H1 (cell line): ENCODE measurements at regions of chr9 and their contacts with region 1.

Region 1: GRCh38 chr9:94681508-94681907 is 42.2 kb upstream of the FBP1 start:
- DNase-seq: peak; percentile 19 to 63
- H3K4me3 ChIP-seq: no peak overlapping the region
- H3K27ac ChIP-seq: no peak overlapping the region
- H3K4me1 ChIP-seq: no peaks in the 10 kb centered on the region; a peak in 1 of 7 replicates
- H3K27me3 ChIP-seq: no peaks in the 10 kb centered on the region; a peak in 1 of 7 replicates
- CTCF ChIP-seq: peak; percentile 25 to 74 (median 66)
- EP300 ChIP-seq: no peak
- POLR2A ChIP-seq: no peak
- RAD21 ChIP-seq: peak; percentile 82 to 88

Region 2: DNA sequence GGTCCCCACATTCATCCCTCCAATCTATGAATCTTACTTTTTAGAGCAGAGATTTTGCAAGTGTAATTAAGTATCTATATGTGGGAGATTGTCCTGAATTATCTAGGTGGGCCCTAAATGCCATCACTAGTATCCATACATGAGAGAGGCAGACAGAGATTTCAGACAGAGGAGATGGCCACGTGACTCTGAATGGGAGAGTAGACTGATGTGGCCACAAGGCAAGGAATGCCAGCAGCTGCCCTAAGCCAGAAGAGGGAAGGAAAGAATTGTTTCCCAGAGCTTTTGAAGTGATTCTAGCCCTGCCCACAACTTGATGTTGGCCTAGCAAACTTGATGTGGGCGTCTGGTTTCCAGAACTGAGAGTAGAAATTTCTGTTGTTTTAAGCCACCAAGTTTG is 216.7 kb before region 1 on chr9:
- CTCF ChIA-PET with region 1: no interaction called
- POLR2A ChIA-PET with region 1: no interaction called
- DNase-seq: no peak
- H3K4me3 ChIP-seq: no peak overlapping the region
- H3K27ac ChIP-seq: no peak overlapping the region
- H3K4me1 ChIP-seq: no peaks in the 10 kb centered on the region
- H3K27me3 ChIP-seq: no peaks in the 10 kb centered on the region
- CTCF ChIP-seq: no peak
- EP300 ChIP-seq: no peak
- POLR2A ChIP-seq: no peak
- RAD21 ChIP-seq: no peak

Region 3: DNA sequence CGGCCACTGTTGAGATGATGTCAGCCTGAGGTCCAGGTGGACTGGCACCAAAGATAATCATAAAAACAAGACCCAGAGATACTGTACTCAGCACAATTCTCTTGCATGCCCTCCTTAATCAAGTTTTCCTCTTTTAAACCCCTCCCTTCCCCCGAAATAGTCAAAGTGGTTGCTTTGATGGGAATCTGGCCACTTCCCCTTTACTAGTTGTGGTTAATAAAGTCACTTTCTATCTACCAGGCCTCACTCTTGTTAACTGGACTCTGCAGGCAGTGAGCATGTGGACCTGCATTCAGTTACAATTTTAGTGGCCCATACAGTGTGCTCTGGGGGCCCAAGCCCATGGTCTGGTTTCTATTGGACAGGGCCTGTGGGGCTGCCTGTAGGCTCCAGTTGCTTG is 105.4 kb before region 1 on chr9:
- CTCF ChIA-PET with region 1: no interaction called
- POLR2A ChIA-PET with region 1: no interaction called
- DNase-seq: peak in 1 of 2 experiments; percentile 27
- H3K4me3 ChIP-seq: no peak overlapping the region
- H3K27ac ChIP-seq: no peak overlapping the region
- H3K4me1 ChIP-seq: no peaks in the 10 kb centered on the region
- H3K27me3 ChIP-seq: peaks cover 0 to 2% (median 0%) of the 10 kb centered on the region in 4 experiments; a peak in 1 of 7 replicates
- CTCF ChIP-seq: no peak
- EP300 ChIP-seq: no peak
- POLR2A ChIP-seq: no peak
- RAD21 ChIP-seq: no peak

Region 4: DNA sequence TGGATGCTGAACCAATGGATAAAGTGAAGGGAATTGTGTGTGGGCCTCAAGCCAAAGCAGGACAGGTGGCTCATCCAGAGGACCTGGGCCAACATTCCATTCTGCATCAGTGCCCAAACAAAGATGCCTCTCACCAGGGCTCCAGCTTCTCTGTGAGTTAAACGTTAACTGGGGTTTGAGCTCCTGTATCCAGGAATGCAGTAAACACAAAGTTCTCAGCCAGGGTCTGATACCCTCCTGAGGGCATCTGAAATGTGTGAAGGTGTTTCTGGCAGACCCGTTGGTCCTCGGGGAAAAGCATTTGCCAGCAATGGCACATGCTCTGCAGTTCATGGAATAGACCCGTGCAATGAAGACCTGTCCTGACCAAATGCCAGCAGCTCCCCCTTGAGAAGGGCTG is 11.1 kb after region 1 on chr9:
- CTCF ChIA-PET with region 1: interaction called, 19 read pairs
- POLR2A ChIA-PET with region 1: interaction called, 3 read pairs
- DNase-seq: no peak
- H3K4me3 ChIP-seq: no peak overlapping the region
- H3K27ac ChIP-seq: no peak overlapping the region
- H3K4me1 ChIP-seq: no peaks in the 10 kb centered on the region
- H3K27me3 ChIP-seq: 0 out of 7 replicates have a peak, but pooled peaks cover 0 to 2% (median 0%) of the 10 kb centered on the region in 4 experiments
- CTCF ChIP-seq: no peak
- EP300 ChIP-seq: no peak
- POLR2A ChIP-seq: no peak
- RAD21 ChIP-seq: no peak

Region 5: GRCh38 chr9:94783102-94783664 is 101.7 kb after region 1 on chr9:
- CTCF ChIA-PET with region 1: interaction called, 18 read pairs
- POLR2A ChIA-PET with region 1: no interaction called
- DNase-seq: peak; percentile 13 to 63
- H3K4me3 ChIP-seq: no peak overlapping the region
- H3K27ac ChIP-seq: no peak overlapping the region
- H3K4me1 ChIP-seq: peaks cover 0 to 6% (median 0%) of the 10 kb centered on the region in 4 experiments; a peak in 3 of 7 replicates
- H3K27me3 ChIP-seq: no peaks in the 10 kb centered on the region
- CTCF ChIP-seq: peak in 2 of 3 experiments; percentile 80 to 85; a peak in 3 of 4 replicates
- EP300 ChIP-seq: no peak
- POLR2A ChIP-seq: no peak
- RAD21 ChIP-seq: peak; percentile 92 to 96

Region 6: DNA sequence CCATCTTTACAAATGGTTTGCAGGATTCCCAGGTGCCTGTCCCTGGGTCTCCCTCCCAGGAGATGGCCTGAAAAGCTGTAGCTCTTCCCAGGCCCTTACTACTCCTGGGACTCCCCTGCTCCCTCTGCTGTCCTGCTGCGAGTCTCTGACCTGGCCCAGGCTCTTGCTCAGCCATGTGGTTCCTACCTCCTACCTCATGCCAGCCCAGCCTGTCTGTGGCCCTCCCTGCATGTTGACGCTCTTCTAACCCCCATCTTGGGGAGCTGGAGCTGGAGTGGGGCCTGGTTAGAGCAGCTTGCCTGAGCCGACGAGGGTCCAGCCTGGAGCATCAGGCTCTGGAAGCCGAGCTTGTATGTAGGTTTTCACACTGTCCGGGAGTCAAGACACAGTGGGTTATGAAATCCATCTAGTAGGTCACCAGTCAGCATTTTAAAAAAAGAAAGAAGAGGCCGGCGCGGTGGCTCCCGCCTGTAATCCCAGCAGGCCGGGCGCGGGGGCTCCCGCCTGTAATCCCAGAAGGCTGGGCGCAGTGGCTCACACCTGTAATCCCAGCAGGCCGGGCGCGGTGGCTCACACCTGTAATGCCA is 391.6 kb after region 1 on chr9:
- CTCF ChIA-PET with region 1: interaction called, 12 read pairs
- POLR2A ChIA-PET with region 1: no interaction called
- DNase-seq: peak in 1 of 2 experiments; percentile 57
- H3K4me3 ChIP-seq: no peak overlapping the region
- H3K27ac ChIP-seq: no peak overlapping the region
- H3K4me1 ChIP-seq: peaks cover 0 to 3% (median 1%) of the 10 kb centered on the region in 4 experiments; a peak in 3 of 7 replicates
- H3K27me3 ChIP-seq: no peaks in the 10 kb centered on the region
- CTCF ChIP-seq: peak; percentile 50 to 63 (median 59)
- EP300 ChIP-seq: no peak
- POLR2A ChIP-seq: no peak
- RAD21 ChIP-seq: peak; percentile 51 to 64